ENCODE measurements at regions of chr9 and their contacts with region 1.

Region 1: DNA sequence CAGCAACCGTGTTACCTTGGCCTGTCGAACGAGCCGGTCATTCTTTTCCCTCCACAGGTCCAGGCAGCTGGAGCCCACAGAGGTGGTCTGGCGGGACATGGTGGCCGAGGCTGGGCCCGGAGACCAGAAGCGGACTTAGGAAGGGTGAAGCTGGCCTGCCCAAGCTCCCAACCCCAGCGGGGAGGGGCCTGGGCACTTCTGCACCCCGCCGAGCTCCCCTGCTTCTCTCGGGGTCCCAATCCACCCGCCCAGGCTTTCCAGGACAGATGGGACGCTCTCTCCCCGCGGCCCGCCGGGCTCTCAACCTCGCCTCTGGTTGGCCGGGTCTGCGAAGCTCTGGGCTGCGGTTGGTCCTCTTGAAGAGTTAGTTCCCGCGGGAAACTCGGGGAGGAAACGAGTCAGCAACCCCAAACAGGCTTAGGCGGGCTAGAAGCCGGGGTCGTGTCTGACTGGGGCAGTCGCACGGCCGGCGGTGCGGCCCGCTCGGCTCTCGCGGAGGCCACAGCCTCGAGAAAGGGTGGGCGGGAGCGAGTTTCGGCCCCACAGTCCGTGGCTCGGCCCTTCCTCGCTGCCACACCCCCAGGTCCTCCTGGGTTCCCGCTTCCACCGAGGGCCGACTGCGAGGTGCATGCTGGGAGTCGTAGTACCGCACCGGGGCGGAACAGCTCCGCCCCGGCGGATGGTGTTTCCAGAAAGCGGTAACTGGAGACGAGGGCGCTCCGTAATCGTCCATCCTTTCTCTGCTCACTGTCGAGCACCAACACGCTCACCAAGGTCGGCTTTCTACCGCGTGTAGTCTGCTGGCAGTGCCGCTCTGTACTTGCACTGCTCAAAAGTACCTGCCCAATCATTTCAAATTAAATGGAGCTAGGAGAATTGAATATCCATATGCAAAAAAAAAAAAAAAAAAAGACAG is at the start of gene FANCG:
- DNase-seq: peak; percentile 81 to 91 (median 85)
- ATAC-seq: peak; percentile 96
- H3K4me3 ChIP-seq: peak within 1 kb of the TSS; percentile 65
- H3K27ac ChIP-seq: peak within 1 kb of the TSS; percentile 89
- H3K4me1 ChIP-seq: peaks cover 3 to 28% of the 10 kb centered on the region in 2 experiments; a peak in 4 of 5 replicates
- H3K27me3 ChIP-seq: no peaks in the 10 kb centered on the region
- CTCF ChIP-seq: no peak
- EP300 ChIP-seq: no peak
- POLR2A ChIP-seq: peak; percentile 75
- RAD21 ChIP-seq: no peak
- polyA plus RNA-seq, gene FANCG: 7.5 to 12.2 TPM

Region 2: GRCh38 chr9:34891386-34891785 is 188.3 kb before region 1 on chr9:
- CTCF ChIA-PET with region 1: no interaction called
- POLR2A ChIA-PET with region 1: no interaction called
- in situ Hi-C with region 1: loop called (anchors 5 kb)
- intact Hi-C with region 1: no loop called
- DNase-seq: no peak
- ATAC-seq: no peak
- H3K4me3 ChIP-seq: no peak overlapping the region
- H3K27ac ChIP-seq: no peak overlapping the region
- H3K4me1 ChIP-seq: no peaks in the 10 kb centered on the region
- H3K27me3 ChIP-seq: no peaks in the 10 kb centered on the region; a peak in 1 of 5 replicates
- CTCF ChIP-seq: no peak
- EP300 ChIP-seq: no peak
- POLR2A ChIP-seq: no peak
- RAD21 ChIP-seq: no peak

Region 3: DNA sequence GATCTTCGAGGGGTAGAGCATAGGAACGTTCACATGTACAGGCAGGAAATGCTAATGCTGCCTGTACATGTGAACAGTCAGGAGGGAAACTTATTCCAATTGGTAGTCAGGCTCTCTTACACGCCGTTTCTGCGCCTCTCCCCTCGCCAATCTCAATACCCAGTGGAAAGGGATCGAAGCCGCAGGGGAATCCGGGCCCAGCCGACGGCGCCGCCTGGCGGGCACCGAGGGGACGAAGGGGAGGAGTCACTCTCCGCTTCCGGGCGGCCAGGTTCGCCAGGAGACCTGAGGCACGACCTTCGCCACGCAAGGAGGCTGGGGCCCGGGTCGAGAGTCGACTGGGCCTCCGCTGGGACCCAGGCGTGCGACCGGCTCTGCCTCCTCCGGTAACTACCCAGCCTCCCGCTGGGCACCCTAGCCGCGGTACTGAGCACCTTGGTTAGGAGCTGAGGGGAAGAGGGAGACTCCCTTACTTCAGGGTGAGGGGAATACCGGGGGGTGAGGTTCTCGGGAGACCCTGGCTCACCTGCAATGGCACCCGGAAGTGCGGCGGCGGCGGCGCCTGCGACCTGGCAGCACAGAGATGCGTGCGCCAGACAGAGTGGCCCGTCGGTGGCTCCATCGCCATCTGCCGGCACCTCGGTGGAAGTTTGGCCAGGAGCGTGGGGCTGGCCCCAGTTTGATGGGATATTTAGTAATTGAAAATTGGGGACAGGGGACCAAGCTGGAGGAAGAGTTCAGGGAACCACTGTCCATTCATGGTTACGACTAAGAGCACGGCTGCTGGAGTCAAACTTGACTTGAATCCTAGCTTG is 16.6 kb after region 1 on chr9 and contains the start of gene PIGO:
- CTCF ChIA-PET with region 1: no interaction called
- POLR2A ChIA-PET with region 1: interaction called, 13 read pairs
- in situ Hi-C with region 1: no loop called
- intact Hi-C with region 1: no loop called
- DNase-seq: peak; percentile 81 to 90 (median 82)
- ATAC-seq: peak; percentile 97
- H3K4me3 ChIP-seq: peak within 1 kb of the TSS; percentile 99
- H3K27ac ChIP-seq: peak within 1 kb of the TSS; percentile 100
- H3K4me1 ChIP-seq: peaks cover 6 to 15% of the 10 kb centered on the region in 2 experiments; a peak in 4 of 5 replicates
- H3K27me3 ChIP-seq: no peaks in the 10 kb centered on the region
- CTCF ChIP-seq: peak; percentile 78 to 85 (median 82)
- EP300 ChIP-seq: no peak
- POLR2A ChIP-seq: peak; percentile 90
- RAD21 ChIP-seq: peak; percentile 57 to 61
- polyA plus RNA-seq, gene PIGO: 5.6 to 5.9 TPM

Measured in K562 (cell line).